ENCODE measurements at regions of chr3 and their contacts with region 1.

Region 1: DNA sequence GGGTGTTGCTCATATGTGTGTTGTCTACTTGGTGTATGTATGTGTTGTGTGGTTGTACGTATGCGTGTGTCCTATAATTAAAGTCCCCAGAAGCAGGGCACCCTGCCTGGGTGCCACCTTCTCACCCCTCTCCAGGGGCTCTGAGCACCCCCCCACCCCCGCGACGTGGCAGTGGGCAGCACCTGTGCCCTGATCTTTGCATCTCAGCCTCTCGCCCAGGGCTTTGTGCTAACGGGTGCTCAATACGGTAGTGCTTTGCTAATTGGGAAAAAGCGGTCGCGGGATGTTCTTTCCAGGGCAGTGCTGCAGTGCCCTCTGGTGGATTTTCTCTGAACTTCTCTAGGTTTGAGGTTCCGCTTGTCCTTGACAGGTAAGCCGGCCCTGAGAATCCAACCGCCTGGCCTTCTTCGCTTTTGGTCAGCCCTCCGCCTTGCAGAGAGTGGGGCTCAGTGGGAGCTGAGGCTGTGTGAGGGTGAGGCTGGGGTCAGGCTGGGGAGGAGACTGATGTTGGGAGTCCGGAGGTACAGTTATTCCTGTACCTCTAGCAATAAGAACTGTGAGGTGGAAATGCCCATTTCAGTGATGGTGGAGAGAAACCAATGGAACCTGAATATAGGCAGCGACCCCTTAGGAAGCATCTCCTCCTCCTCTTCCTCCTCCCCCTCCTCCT is 17.6 kb upstream of the EPHB3 start:
- DNase-seq: peak; percentile 86
- H3K4me3 Mint-ChIP-seq: no peak overlapping the region
- H3K27ac Mint-ChIP-seq: no peak overlapping the region
- H3K4me1 Mint-ChIP-seq: peaks cover 7% of the 10 kb centered on the region
- H3K27me3 Mint-ChIP-seq: peaks cover 7% of the 10 kb centered on the region

Region 2: DNA sequence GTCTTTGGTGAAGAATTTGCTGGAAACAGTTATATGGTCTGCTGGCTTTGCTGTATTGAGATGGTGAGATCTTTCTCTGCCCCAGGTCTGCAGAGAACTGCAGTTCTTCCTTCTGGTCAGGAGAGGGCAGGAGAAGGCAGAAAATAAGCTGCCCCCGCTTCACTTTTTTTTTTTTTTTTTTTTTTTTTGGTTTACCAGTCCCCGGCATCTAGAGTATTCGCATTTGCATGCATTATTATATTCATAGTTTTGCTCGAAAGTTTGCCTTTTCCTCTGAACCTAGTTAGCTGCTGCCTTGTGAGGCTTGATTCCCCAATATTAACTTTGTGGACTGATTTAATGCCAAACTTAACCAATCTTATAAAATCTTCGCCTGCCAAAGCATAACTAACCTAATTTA is 648.7 kb before region 1 on chr3:
- CTCF ChIA-PET with region 1: no interaction called
- POLR2A ChIA-PET with region 1: no interaction called
- intact Hi-C with region 1: loop called (anchors 5 kb)
- DNase-seq: peak; percentile 41
- H3K4me3 Mint-ChIP-seq: no peak overlapping the region
- H3K27ac Mint-ChIP-seq: no peak overlapping the region
- H3K4me1 Mint-ChIP-seq: no peaks in the 10 kb centered on the region
- H3K27me3 Mint-ChIP-seq: peaks cover 15% of the 10 kb centered on the region

Region 3: GRCh38 chr3:183980403-183980802 is 563.6 kb before region 1 on chr3:
- CTCF ChIA-PET with region 1: no interaction called
- POLR2A ChIA-PET with region 1: no interaction called
- intact Hi-C with region 1: no loop called
- DNase-seq: no peak
- H3K4me3 Mint-ChIP-seq: no peak overlapping the region
- H3K27ac Mint-ChIP-seq: no peak overlapping the region
- H3K4me1 Mint-ChIP-seq: no peaks in the 10 kb centered on the region
- H3K27me3 Mint-ChIP-seq: no peaks in the 10 kb centered on the region

Region 4: GRCh38 chr3:184241447-184242296 is 302.3 kb before region 1 on chr3:
- CTCF ChIA-PET with region 1: no interaction called
- POLR2A ChIA-PET with region 1: no interaction called
- intact Hi-C with region 1: no loop called
- DNase-seq: peak; percentile 20
- H3K4me3 Mint-ChIP-seq: no peak overlapping the region
- H3K27ac Mint-ChIP-seq: no peak overlapping the region
- H3K4me1 Mint-ChIP-seq: no peaks in the 10 kb centered on the region
- H3K27me3 Mint-ChIP-seq: no peaks in the 10 kb centered on the region

Region 5: DNA sequence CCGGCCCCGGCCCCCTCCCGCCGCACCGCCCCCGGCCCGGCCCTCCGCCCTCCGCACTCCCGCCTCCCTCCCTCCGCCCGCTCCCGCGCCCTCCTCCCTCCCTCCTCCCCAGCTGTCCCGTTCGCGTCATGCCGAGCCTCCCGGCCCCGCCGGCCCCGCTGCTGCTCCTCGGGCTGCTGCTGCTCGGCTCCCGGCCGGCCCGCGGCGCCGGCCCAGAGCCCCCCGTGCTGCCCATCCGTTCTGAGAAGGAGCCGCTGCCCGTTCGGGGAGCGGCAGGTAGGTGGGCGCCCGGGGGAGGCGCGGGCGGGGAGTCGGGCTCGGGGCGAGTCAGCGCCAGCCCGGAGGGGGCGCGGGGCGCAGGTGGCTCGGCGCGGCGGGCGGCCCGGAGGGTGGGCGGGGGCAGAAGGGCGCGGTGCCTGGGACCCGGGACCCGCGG is 163.8 kb before region 1 on chr3:
- CTCF ChIA-PET with region 1: interaction called, 17 read pairs
- POLR2A ChIA-PET with region 1: no interaction called
- intact Hi-C with region 1: no loop called
- DNase-seq: peak; percentile 49
- H3K4me3 Mint-ChIP-seq: no peak overlapping the region
- H3K27ac Mint-ChIP-seq: no peak overlapping the region
- H3K4me1 Mint-ChIP-seq: peaks cover 9% of the 10 kb centered on the region
- H3K27me3 Mint-ChIP-seq: peaks cover 60% of the 10 kb centered on the region

Region 6: DNA sequence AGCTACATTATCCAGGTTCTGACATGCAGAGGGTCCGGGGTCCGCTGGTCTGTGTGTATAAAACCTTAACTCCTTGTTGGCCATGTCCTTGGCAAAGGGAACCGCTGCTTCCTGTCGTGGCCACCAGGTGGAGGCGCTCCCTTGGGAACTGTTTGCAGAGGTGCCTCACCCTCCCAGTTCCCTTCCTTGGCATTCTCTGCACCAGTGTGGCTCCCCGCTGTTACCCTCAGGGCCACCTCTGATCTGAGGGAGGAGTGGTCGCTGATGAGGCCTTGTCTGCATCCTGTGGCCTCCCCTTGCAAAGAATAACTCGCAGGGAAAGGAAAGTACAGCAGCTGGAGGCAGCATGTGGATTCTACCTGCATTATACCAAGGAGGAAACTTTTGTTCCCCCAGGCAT is 74.6 kb before region 1 on chr3:
- CTCF ChIA-PET with region 1: interaction called, 32 read pairs
- POLR2A ChIA-PET with region 1: no interaction called
- intact Hi-C with region 1: loop called (anchors 1 kb)
- DNase-seq: peak; percentile 64
- H3K4me3 Mint-ChIP-seq: no peak overlapping the region
- H3K27ac Mint-ChIP-seq: no peak overlapping the region
- H3K4me1 Mint-ChIP-seq: peaks cover 6% of the 10 kb centered on the region
- H3K27me3 Mint-ChIP-seq: peaks cover 20% of the 10 kb centered on the region

Region 7: DNA sequence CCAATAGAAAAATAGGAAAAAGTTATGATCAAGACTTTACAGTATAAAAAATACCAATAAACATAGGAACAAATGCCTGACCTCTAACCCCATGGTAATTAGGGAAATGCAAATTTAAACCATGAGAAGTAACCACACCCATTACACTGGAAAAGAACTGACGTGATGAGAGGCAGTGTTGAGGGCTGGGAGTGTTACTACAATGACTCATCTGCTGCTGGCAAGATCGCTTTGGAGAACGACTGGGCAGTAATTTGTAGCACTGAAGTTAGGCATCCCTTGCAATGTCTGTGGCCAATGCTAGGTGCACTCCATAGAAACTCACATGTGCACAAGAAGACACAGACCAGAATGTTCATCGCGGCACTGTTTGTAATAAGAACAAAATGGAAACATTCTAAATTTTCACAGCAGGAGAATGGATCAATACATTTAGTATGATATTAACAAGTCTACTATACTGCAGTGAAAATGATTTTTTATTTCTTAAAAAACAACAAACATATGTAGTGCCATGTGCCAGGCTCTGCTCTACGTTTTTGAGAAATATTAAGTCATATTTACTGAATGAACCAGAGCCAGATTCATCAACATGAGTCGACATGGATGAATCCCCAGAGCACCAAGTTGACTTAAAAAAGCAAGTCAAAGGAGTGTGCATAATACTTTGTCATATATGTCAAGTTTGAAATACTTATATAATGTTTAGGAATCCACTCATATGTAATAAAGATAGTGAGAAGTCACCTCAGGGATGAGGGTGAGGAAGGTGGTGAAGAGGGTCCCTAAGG is 20.0 kb before region 1 on chr3:
- CTCF ChIA-PET with region 1: interaction called, 24 read pairs
- POLR2A ChIA-PET with region 1: no interaction called
- intact Hi-C with region 1: no loop called
- DNase-seq: peak; percentile 59
- H3K4me3 Mint-ChIP-seq: no peak overlapping the region
- H3K27ac Mint-ChIP-seq: no peak overlapping the region
- H3K4me1 Mint-ChIP-seq: peaks cover 18% of the 10 kb centered on the region
- H3K27me3 Mint-ChIP-seq: peaks cover 24% of the 10 kb centered on the region